Dorsolateral prefrontal cortex (tissue), 120 donors: ENCODE measurements at regions of chr6 and their contacts with region 1.

Region 1: GRCh38 chr6:33711140-33712129 is at the start of gene UQCC2:
- DNase-seq: peak; percentile 94 to 97 (median 96)
- H3K4me3 ChIP-seq: peak within 1 kb of the TSS; percentile 40 to 99 (median 79)
- H3K27ac ChIP-seq: peak within 1 kb of the TSS; percentile 78 to 99 (median 94)
- H3K27me3 ChIP-seq: no peaks in the 10 kb centered on the region
- CTCF ChIP-seq: peak; percentile 37 to 96 (median 83)
- total RNA-seq, gene UQCC2: 32.1 to 86.2 (median 53.0) TPM

Region 2: GRCh38 chr6:33454009-33454946 is 257.2 kb before region 1 on chr6 and contains the start of gene ZBTB9:
- intact Hi-C with region 1: loop called in 1 of 2 experiments (anchors 10 kb)
- DNase-seq: peak; percentile 95 to 99 (median 96)
- H3K4me3 ChIP-seq: peak within 1 kb of the TSS; percentile 54 to 99 (median 88)
- H3K27ac ChIP-seq: peak within 1 kb of the TSS in 57 of 59 donors; percentile 7 to 90 (median 73)
- H3K27me3 ChIP-seq: no peaks in the 10 kb centered on the region
- CTCF ChIP-seq: peak in 39 of 56 donors; percentile 9 to 59 (median 32)
- total RNA-seq, gene ZBTB9: 1.9 to 15.2 (median 6.9) TPM

Region 3: DNA sequence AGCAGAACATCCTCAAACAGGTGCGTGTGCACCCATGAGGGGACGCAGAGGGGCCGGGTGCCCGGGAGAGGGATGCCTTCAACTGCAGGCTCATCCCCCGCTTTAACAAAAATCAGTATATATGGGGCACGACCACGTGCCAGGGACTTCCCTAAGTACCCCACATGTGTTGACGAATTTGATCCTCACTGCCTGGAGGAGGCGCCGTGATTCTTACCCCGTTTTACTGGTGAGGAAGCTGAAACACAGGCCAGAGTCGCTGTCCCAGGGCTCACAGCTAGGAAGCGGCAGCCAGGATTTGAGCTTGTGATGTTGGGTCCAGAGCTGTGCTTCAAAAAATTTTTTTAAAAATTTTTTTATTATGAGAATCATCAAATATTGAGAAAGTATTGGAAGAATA is 45.5 kb before region 1 on chr6:
- intact Hi-C with region 1: loop called in 1 of 2 experiments (anchors 1 kb)
- DNase-seq: no peak
- H3K4me3 ChIP-seq: no peak overlapping the region
- H3K27ac ChIP-seq: no peak overlapping the region
- H3K27me3 ChIP-seq: no peaks in the 10 kb centered on the region
- CTCF ChIP-seq: no peak

Region 4: GRCh38 chr6:33761922-33762629 is 50.6 kb after region 1 on chr6:
- intact Hi-C with region 1: loop called (anchors 1 to 5 kb)
- DNase-seq: peak in 9 of 10 donors; percentile 49 to 79 (median 64)
- H3K4me3 ChIP-seq: no peak overlapping the region
- H3K27ac ChIP-seq: peak overlapping the region in 22 of 59 donors; percentile 6 to 69 (median 32)
- H3K27me3 ChIP-seq: no peaks in the 10 kb centered on the region
- CTCF ChIP-seq: peak; percentile 35 to 87 (median 64)

Region 5: GRCh38 chr6:34027445-34027936 is 316.1 kb after region 1 on chr6:
- intact Hi-C with region 1: loop called in 1 of 2 experiments (anchors 2 kb)
- DNase-seq: peak in 1 of 10 donors; percentile 59
- H3K4me3 ChIP-seq: no peak overlapping the region
- H3K27ac ChIP-seq: peak overlapping the region in 1 of 59 donors; percentile 77
- H3K27me3 ChIP-seq: peaks cover 0 to 4% (median 0%) of the 10 kb centered on the region in 45 donors
- CTCF ChIP-seq: peak; percentile 42 to 77 (median 65)